Caco-2 (cell line): ENCODE measurements at regions of chr7 and their contacts with region 1.

Region 1: GRCh38 chr7:47293884-47294555 is 287.9 kb downstream of the TNS3 start:
- DNase-seq: no peak
- H3K4me3 ChIP-seq: no peak overlapping the region
- H3K4me3 Mint-ChIP-seq: no peak overlapping the region
- H3K27ac Mint-ChIP-seq: no peak overlapping the region
- H3K4me1 ChIP-seq: peaks cover 26% of the 10 kb centered on the region
- H3K4me1 Mint-ChIP-seq: peaks cover 41% of the 10 kb centered on the region
- H3K27me3 ChIP-seq: no peaks in the 10 kb centered on the region
- H3K27me3 Mint-ChIP-seq: no peaks in the 10 kb centered on the region
- CTCF ChIP-seq: no peak

Region 2: DNA sequence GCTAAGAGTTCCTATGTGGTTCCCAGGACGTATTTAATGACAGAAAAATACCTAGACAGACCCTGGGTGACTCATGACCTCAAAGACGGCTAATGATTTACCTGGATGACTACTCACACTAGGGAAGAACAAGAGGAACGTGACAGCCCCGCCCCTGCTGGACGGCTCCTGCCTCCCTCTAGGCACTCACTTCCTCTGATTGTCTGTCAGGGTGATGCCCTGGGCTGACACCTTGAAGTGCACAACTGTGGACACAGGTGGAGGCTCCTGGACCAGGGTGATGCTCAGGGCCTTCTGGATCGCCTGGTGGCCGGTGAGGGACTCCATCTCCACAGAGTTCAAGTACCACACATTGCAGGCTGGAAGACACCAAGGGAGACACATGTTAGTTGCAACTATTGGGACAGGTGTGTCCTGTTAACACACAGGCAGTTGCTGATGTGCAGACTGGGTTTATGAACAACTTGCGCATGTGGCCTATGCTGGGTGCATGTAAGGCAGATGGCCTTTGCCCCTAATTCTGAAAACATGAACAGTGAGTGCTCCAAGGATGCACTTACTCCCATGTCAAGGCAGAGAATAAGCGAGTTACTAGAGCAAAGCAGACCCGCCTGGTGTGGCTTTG is 10.4 kb before region 1 on chr7:
- CTCF ChIA-PET with region 1: no interaction called
- POLR2A ChIA-PET with region 1: no interaction called
- intact Hi-C with region 1: loop called (anchors 1 kb)
- DNase-seq: peak; percentile 74 to 86
- H3K4me3 ChIP-seq: no peak overlapping the region
- H3K4me3 Mint-ChIP-seq: no peak overlapping the region
- H3K27ac Mint-ChIP-seq: no peak overlapping the region
- H3K4me1 ChIP-seq: peaks cover 15% of the 10 kb centered on the region
- H3K4me1 Mint-ChIP-seq: peaks cover 11% of the 10 kb centered on the region
- H3K27me3 ChIP-seq: no peaks in the 10 kb centered on the region
- H3K27me3 Mint-ChIP-seq: no peaks in the 10 kb centered on the region
- CTCF ChIP-seq: peak in 1 of 2 experiments; percentile 4

Region 3: DNA sequence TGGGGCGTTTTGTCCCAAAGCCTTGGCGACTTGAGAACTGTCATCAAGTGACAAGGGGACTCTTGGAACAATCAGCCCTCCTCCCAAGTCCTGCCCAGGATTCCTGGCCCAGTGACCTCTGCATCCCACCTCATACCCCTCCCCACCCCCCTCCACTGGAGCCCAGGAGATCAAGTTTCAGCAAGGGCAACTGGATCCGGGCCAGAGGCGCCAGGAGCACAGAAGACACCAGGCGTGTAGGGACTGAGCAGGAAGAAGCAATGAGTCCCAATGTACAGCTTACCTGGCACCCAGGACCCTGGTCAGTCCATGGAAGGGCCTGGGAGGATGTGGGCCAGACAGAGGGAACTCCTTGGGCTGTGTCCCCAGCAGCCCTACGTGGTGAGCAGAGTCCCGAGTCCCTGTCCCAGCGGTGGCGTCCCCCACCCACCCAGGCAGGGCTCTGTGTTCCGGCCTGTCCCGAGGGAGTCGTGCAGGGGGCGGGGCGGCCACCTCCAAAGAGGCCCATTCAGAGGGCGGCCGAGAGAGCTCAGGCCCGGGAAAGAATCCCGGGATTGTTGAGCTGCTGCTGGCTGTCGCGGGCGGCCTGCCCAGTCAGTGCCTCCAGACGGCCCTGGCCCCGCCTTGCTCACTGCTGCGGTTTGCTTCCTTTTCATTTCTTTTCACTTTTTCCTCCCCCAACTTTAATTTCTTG is 33.8 kb after region 1 on chr7:
- CTCF ChIA-PET with region 1: no interaction called
- POLR2A ChIA-PET with region 1: no interaction called
- intact Hi-C with region 1: loop called (anchors 1 kb)
- DNase-seq: no peak
- H3K4me3 ChIP-seq: no peak overlapping the region
- H3K4me3 Mint-ChIP-seq: peak overlapping the region; percentile 17
- H3K27ac Mint-ChIP-seq: peak overlapping the region; percentile 56
- H3K4me1 ChIP-seq: peaks cover 43% of the 10 kb centered on the region
- H3K4me1 Mint-ChIP-seq: peaks cover 44% of the 10 kb centered on the region
- H3K27me3 ChIP-seq: no peaks in the 10 kb centered on the region
- H3K27me3 Mint-ChIP-seq: no peaks in the 10 kb centered on the region
- CTCF ChIP-seq: no peak